ENCODE measurements at regions of chr12 and their contacts with region 1.

Region 1: GRCh38 chr12:71439362-71440314 is at the start of gene LGR5:
- DNase-seq: peak; percentile 84 to 86
- H3K4me3 ChIP-seq: peak within 1 kb of the TSS; percentile 61
- H3K4me3 Mint-ChIP-seq: peak within 1 kb of the TSS; percentile 82
- H3K27ac Mint-ChIP-seq: peak within 1 kb of the TSS; percentile 40
- H3K4me1 ChIP-seq: peaks cover 3% of the 10 kb centered on the region; the same call in 1 of the 2 replicates
- H3K4me1 Mint-ChIP-seq: peaks cover 24% of the 10 kb centered on the region
- H3K27me3 ChIP-seq: no peaks in the 10 kb centered on the region
- H3K27me3 Mint-ChIP-seq: no peaks in the 10 kb centered on the region
- CTCF ChIP-seq: no peak
- total RNA-seq, gene LGR5: 28.0 and 28.4 TPM in 2 replicates

Region 2: DNA sequence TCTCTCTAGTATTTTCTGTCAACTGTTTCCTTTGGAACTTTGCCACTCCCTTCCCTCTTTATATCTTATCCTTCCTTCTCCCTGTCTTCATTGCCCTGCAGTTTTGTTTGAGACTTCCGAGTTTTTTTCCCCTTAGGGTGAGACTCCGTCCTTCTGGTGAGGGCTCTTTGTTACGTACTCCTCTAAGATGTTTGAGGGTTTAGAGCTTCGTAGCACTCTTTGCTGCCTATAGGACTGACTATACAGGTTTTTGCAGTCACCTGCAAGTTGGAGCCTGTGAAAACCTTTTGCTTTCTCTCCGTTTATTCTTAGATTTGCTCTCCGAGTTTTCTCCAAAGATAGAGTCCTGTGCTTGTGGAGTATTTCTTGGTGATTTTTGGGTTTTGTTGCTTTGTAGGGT is 1656.3 kb before region 1 on chr12:
- CTCF ChIA-PET with region 1: no interaction called
- POLR2A ChIA-PET with region 1: no interaction called
- intact Hi-C with region 1: no loop called
- DNase-seq: no peak
- H3K4me3 ChIP-seq: no peak overlapping the region
- H3K4me3 Mint-ChIP-seq: no peak overlapping the region
- H3K27ac Mint-ChIP-seq: peak overlapping the region; percentile 19
- H3K4me1 ChIP-seq: no peaks in the 10 kb centered on the region
- H3K4me1 Mint-ChIP-seq: peaks cover 6% of the 10 kb centered on the region
- H3K27me3 ChIP-seq: no peaks in the 10 kb centered on the region
- H3K27me3 Mint-ChIP-seq: no peaks in the 10 kb centered on the region
- CTCF ChIP-seq: no peak

Region 3: GRCh38 chr12:71456316-71456715 is 16.7 kb after region 1 on chr12:
- CTCF ChIA-PET with region 1: no interaction called
- POLR2A ChIA-PET with region 1: no interaction called
- intact Hi-C with region 1: loop called (anchors 2 kb)
- DNase-seq: no peak
- H3K4me3 ChIP-seq: no peak overlapping the region
- H3K4me3 Mint-ChIP-seq: no peak overlapping the region
- H3K27ac Mint-ChIP-seq: no peak overlapping the region
- H3K4me1 ChIP-seq: peaks cover 20% of the 10 kb centered on the region
- H3K4me1 Mint-ChIP-seq: no peaks in the 10 kb centered on the region
- H3K27me3 ChIP-seq: no peaks in the 10 kb centered on the region
- H3K27me3 Mint-ChIP-seq: no peaks in the 10 kb centered on the region
- CTCF ChIP-seq: no peak

Region 4: DNA sequence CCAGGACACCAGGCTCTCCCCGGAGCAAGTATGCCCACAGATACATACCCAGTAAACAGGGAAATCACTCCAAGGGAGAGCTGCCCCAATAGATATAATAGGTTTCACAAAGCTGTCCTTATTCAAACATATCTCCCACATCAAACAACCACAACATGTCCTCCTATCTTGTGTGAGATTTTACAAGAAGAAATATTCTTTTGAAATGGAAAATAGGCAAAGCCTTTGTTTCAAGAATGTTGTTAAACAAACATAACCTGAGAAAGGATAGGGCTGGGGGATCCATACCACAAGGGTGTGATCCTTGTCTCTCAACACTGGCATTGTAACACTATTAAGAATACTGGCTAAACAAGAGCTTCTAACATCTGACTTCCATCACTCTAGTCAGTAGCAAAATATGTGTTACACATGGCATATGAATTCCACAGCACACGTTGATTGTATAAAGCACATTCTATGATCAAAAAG is 32.8 kb after region 1 on chr12:
- CTCF ChIA-PET with region 1: no interaction called
- POLR2A ChIA-PET with region 1: no interaction called
- intact Hi-C with region 1: loop called (anchors 1 kb)
- DNase-seq: peak in 1 of 2 experiments; percentile 18
- H3K4me3 ChIP-seq: no peak overlapping the region
- H3K4me3 Mint-ChIP-seq: no peak overlapping the region
- H3K27ac Mint-ChIP-seq: no peak overlapping the region
- H3K4me1 ChIP-seq: peaks cover 23% of the 10 kb centered on the region
- H3K4me1 Mint-ChIP-seq: peaks cover 19% of the 10 kb centered on the region
- H3K27me3 ChIP-seq: no peaks in the 10 kb centered on the region
- H3K27me3 Mint-ChIP-seq: no peaks in the 10 kb centered on the region
- CTCF ChIP-seq: no peak

Region 5: DNA sequence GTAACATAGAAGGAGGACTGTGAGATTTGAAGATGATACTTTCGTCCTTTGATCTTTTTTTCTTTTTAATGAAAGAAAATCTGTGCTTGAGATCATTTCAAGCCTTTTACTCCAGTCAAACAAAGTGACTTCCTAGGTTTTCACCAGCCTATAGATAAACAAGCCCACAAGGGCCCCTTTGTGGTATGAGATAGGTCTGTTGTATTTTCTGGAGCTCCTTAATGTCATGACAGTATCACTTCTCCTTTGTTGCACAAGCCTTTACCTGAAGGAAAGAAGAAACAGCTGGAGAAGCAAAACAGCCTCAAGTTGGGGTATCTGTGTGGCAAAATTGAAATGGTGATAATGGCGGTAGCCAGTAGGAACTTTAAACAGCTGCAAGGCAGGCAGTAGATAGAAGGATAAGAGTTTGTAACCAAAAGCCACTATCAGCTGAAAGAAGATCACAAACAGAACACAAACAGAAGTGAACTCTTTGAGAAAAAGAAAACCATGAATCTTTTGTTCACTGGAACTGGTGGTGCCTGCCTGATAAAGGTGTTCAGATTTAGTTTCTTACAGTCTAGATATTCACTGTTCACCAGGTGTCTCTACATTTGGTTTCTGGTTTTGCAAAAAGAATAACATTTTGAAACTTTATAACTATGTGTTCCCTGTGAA is 96.8 kb after region 1 on chr12:
- CTCF ChIA-PET with region 1: interaction called, 3 read pairs
- POLR2A ChIA-PET with region 1: no interaction called
- intact Hi-C with region 1: loop called (anchors 5 kb)
- DNase-seq: peak in 1 of 2 experiments; percentile 28
- H3K4me3 ChIP-seq: no peak overlapping the region
- H3K4me3 Mint-ChIP-seq: peak overlapping the region; percentile 59
- H3K27ac Mint-ChIP-seq: peak overlapping the region; percentile 88
- H3K4me1 ChIP-seq: peaks cover 39% of the 10 kb centered on the region
- H3K4me1 Mint-ChIP-seq: peaks cover 35% of the 10 kb centered on the region
- H3K27me3 ChIP-seq: no peaks in the 10 kb centered on the region
- H3K27me3 Mint-ChIP-seq: no peaks in the 10 kb centered on the region
- CTCF ChIP-seq: no peak